PC-3 (cell line): ENCODE measurements at regions of chr11 and their contacts with region 1.

Region 1: GRCh38 chr11:44621140-44621681 is 55.7 kb downstream of the CD82 start:
- DNase-seq: peak; percentile 72
- ATAC-seq: peak; percentile 82
- H3K4me3 ChIP-seq: no peak overlapping the region
- H3K27ac ChIP-seq: no peak overlapping the region
- H3K4me1 ChIP-seq: no peaks in the 10 kb centered on the region
- H3K27me3 ChIP-seq: no peaks in the 10 kb centered on the region
- CTCF ChIP-seq: peak; percentile 90

Region 2: DNA sequence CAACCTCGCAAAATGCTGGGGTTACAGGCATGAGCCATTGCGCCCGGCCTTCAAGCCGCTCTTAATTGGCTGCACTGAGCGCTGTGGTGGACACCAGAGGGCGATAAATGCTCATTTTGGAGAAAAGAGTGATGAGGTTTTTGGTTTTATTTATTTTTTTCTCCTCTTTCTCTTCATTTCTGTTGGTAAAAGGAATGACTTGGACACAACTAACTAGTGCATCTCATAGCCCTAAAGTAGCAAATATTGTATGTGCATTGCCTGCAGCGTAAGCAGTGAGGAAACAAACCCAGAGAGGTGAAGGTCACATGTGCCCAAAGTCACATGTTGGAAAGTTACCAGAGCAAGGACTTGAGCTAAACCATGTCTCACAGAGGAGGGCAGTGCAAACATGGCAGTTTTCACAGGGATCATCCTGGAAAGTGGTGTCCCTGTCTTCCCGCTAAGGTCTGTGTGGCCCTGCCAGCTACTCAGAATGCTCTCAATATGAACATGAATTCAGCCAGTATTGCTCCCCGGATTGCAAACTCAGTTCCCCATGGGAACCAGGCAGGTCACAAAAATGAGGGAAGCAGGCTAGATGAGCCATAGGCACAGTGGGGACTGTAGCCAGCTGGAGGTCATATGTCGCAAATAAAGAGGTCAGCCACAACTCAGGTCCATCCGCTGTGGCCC is 64.3 kb before region 1 on chr11:
- CTCF ChIA-PET with region 1: interaction called, 29 read pairs
- POLR2A ChIA-PET with region 1: interaction called, 4 read pairs
- intact Hi-C with region 1: loop called (anchors 1 kb)
- DNase-seq: peak; percentile 62
- ATAC-seq: peak; percentile 71
- H3K4me3 ChIP-seq: no peak overlapping the region
- H3K27ac ChIP-seq: no peak overlapping the region
- H3K4me1 ChIP-seq: no peaks in the 10 kb centered on the region
- H3K27me3 ChIP-seq: no peaks in the 10 kb centered on the region
- CTCF ChIP-seq: peak; percentile 76

Region 3: GRCh38 chr11:44565211-44565952 is 55.8 kb before region 1 on chr11 and contains the start of gene CD82:
- CTCF ChIA-PET with region 1: interaction called, 33 read pairs
- POLR2A ChIA-PET with region 1: no interaction called
- intact Hi-C with region 1: loop called (anchors 2 kb)
- DNase-seq: peak; percentile 96
- ATAC-seq: peak; percentile 95
- H3K4me3 ChIP-seq: peak within 1 kb of the TSS; percentile 76
- H3K27ac ChIP-seq: peak within 1 kb of the TSS; percentile 52
- H3K4me1 ChIP-seq: peaks cover 21% of the 10 kb centered on the region
- H3K27me3 ChIP-seq: no peaks in the 10 kb centered on the region
- CTCF ChIP-seq: no peak
- total RNA-seq, gene CD82: 4.3 and 5.0 TPM in 2 replicates

Region 4: GRCh38 chr11:44905131-44905866 is 284.1 kb after region 1 on chr11:
- CTCF ChIA-PET with region 1: interaction called, 13 read pairs
- POLR2A ChIA-PET with region 1: no interaction called
- intact Hi-C with region 1: no loop called
- DNase-seq: no peak
- ATAC-seq: no peak
- H3K4me3 ChIP-seq: no peak overlapping the region
- H3K27ac ChIP-seq: no peak overlapping the region
- H3K4me1 ChIP-seq: no peaks in the 10 kb centered on the region
- H3K27me3 ChIP-seq: peaks cover 14% of the 10 kb centered on the region
- CTCF ChIP-seq: no peak

Region 5: GRCh38 chr11:44911029-44911814 is 290.0 kb after region 1 on chr11:
- CTCF ChIA-PET with region 1: interaction called, 11 read pairs
- POLR2A ChIA-PET with region 1: no interaction called
- intact Hi-C with region 1: loop called (anchors 1 kb)
- DNase-seq: peak; percentile 91
- ATAC-seq: peak; percentile 96
- H3K4me3 ChIP-seq: peak overlapping the region; percentile 34; the same call in 1 of the 2 replicates
- H3K27ac ChIP-seq: no peak overlapping the region
- H3K4me1 ChIP-seq: no peaks in the 10 kb centered on the region
- H3K27me3 ChIP-seq: peaks cover 14% of the 10 kb centered on the region
- CTCF ChIP-seq: peak; percentile 82